Caco-2 (cell line): ENCODE measurements at regions of chr15 and their contacts with region 1.

Region 1: DNA sequence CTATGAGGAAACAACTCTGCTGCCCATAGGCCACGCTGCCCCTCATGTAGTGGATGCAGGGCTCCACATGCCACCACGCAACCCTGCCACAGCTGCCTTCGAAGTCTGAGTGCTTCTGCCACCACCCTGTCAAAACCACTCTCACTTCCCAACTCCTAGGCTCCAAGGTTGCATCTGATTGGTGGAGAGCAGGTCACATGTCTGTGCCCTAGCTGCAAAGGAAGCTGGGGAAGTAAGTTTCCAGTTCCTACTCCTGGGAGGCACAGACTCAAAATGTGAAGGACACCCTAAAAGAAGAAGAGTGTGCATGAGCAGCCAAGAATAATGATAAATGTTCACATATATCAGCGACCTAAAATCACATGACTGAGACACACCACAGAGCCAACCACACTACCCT is 31.9 kb upstream of the TICRR start:
- DNase-seq: no peak
- H3K4me3 ChIP-seq: no peak overlapping the region
- H3K4me3 Mint-ChIP-seq: no peak overlapping the region
- H3K27ac Mint-ChIP-seq: no peak overlapping the region
- H3K4me1 ChIP-seq: no peaks in the 10 kb centered on the region
- H3K4me1 Mint-ChIP-seq: no peaks in the 10 kb centered on the region
- H3K27me3 ChIP-seq: no peaks in the 10 kb centered on the region
- H3K27me3 Mint-ChIP-seq: peaks cover 16% of the 10 kb centered on the region
- CTCF ChIP-seq: no peak

Region 2: DNA sequence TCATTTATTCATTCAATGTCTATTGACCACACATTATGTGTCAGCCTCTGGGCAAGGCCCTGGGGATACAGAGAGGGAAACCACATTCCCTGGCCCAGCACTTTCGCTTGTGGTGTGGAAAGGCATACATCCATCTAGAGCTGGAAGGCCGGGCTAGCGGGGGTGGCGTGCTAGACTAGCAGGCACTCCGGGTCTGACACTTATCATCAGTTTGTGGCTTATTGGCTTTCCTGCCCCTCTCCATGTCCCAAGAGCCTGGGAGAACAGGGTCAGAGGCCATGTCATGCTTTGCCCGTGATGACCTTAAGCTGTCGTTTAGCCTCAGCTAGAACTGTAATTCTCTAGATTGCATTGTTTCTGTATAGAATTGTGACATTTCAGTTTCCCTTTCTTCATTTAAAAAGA is 157.5 kb before region 1 on chr15:
- CTCF ChIA-PET with region 1: no interaction called
- POLR2A ChIA-PET with region 1: interaction called, 12 read pairs
- intact Hi-C with region 1: no loop called
- DNase-seq: no peak
- H3K4me3 ChIP-seq: no peak overlapping the region
- H3K4me3 Mint-ChIP-seq: no peak overlapping the region
- H3K27ac Mint-ChIP-seq: no peak overlapping the region
- H3K4me1 ChIP-seq: no peaks in the 10 kb centered on the region
- H3K4me1 Mint-ChIP-seq: no peaks in the 10 kb centered on the region
- H3K27me3 ChIP-seq: no peaks in the 10 kb centered on the region; the same call in 1 of the 2 replicates
- H3K27me3 Mint-ChIP-seq: peaks cover 22% of the 10 kb centered on the region
- CTCF ChIP-seq: no peak

Region 3: DNA sequence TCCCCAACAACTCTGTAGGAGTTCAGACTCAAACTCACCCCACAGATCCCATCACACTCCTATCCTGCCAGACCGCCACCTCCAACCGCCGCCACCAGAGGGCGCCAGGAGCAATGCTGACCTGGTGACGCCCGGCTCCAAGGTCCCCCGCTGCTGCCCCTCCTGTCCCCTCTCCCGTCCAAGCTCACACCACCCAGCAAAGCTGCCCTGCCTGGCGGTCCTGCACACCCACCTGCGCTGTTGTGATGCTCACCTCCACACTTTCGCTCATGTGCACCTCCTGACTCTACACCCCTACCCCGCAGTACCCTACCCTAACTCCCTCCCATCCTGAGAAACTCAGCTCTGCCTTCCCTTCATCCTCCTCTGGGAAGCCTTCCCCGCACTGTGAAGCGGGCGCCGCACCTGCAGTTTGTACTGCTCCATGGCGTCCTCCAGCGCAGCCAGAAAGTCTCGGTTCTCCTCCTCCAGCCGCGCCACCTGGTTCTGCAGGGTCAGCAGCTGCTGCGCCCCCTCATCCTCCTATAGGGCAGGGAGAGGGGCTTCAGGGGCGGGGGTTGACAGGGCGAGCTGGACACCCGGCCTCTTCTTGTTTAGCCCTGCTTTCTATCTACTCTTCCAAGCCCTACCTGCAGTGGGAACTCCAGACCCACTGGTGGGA is 103.9 kb after region 1 on chr15:
- CTCF ChIA-PET with region 1: no interaction called
- POLR2A ChIA-PET with region 1: no interaction called
- intact Hi-C with region 1: no loop called
- DNase-seq: peak; percentile 62 to 80
- H3K4me3 ChIP-seq: no peak overlapping the region
- H3K4me3 Mint-ChIP-seq: no peak overlapping the region
- H3K27ac Mint-ChIP-seq: no peak overlapping the region
- H3K4me1 ChIP-seq: no peaks in the 10 kb centered on the region
- H3K4me1 Mint-ChIP-seq: no peaks in the 10 kb centered on the region
- H3K27me3 ChIP-seq: no peaks in the 10 kb centered on the region
- H3K27me3 Mint-ChIP-seq: no peaks in the 10 kb centered on the region
- CTCF ChIP-seq: peak; percentile 67 to 77